ENCODE measurements at regions of chrX and their contacts with region 1.

Region 1: DNA sequence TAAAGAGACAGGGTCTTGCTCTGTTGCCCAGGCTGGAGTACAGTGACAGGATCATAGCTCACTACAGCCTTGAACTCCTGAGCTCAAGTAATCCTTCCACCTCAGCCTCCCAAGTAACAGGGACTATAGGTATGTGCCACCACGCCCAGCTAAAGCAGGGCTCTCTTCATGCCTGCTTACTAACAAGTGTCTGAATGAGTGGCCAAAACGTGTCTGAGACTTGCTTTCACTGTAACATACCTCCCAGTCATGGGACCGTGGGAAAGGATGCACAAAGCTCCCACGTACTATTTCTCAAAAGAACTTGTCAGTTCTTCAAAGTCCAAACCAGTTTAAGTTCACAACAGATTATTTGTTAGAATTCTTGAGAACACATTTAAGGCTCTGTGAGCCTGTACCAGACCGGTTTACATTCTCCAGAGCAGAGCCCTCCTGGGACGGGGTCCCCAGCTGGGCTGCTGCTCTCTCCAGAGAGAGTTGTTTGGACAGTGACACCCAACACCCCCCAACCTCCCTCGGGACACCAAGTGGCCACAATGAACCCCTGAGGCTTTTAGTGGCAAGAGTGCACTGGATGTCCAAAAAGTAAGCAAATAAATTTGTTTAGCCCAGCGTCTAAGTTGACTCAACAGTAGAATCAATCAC is 24.1 kb downstream of the SH3KBP1 start:
- DNase-seq: peak; percentile 88
- ATAC-seq: peak; percentile 70
- H3K4me3 ChIP-seq: 0 out of 2 replicates have a peak overlapping the region, but pooled peaks have one; percentile 39
- H3K27ac ChIP-seq: peak overlapping the region; percentile 93
- H3K4me1 ChIP-seq: peaks cover 52% of the 10 kb centered on the region
- H3K27me3 ChIP-seq: no peaks in the 10 kb centered on the region
- CTCF ChIP-seq: no peak
- EP300 ChIP-seq: peak; percentile 35 to 69; a peak in 2 of 4 replicates
- POLR2A ChIP-seq: no peak
- RAD21 ChIP-seq: 0 out of 2 replicates have a peak, but pooled peaks have one; percentile 2

Region 2: DNA sequence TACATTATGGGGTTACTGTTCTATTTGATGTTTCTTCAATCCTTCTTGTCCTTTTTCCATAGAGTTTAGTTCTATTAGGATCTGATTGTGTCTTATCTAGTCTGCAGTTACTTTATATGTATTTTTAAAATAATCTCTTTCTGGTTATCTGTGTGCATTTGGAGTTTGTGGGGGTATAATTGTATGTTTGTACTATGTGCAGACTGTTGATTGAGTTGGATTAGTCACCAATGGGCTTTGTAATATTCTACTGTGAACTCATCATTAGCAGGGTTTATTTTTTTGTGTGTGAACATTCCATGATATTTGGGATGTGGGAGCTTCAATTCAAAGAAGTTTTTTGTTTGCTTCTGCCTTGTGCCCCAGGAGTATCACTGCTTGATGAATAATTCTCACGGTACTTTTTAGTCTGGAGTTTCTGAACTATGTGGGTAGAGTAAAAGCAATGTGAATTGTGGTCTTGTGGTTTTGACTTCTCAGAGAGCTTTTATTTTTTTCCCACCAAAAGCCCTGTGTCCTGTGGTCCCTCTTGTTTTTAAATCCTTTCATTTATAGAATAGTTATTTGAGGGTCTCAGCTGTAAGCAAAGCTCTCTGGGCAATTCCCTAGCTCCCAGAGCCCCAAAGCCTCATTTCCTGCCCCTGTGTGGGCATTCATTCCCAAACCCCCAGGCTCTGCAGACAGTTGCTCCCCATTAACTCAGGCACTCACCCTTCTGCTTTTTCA is 1007.3 kb before region 1 on chrX:
- CTCF ChIA-PET with region 1: no interaction called
- POLR2A ChIA-PET with region 1: no interaction called
- RAD21 ChIA-PET with region 1: no interaction called
- SMC1A ChIA-PET with region 1: no interaction called
- in situ Hi-C with region 1: loop called (anchors 10 kb)
- intact Hi-C with region 1: no loop called
- DNase-seq: peak; percentile 90
- ATAC-seq: peak; percentile 94
- H3K4me3 ChIP-seq: no peak overlapping the region
- H3K27ac ChIP-seq: peak overlapping the region; percentile 96
- H3K4me1 ChIP-seq: peaks cover 19% of the 10 kb centered on the region
- H3K27me3 ChIP-seq: no peaks in the 10 kb centered on the region
- CTCF ChIP-seq: no peak
- EP300 ChIP-seq: peak; percentile 14 to 55; a peak in 1 of 4 replicates
- POLR2A ChIP-seq: no peak
- RAD21 ChIP-seq: peak; percentile 42; the same call in 1 of the 2 replicates

Region 3: GRCh38 chrX:19747652-19748610 is 115.4 kb before region 1 on chrX:
- CTCF ChIA-PET with region 1: interaction called, 4 read pairs
- POLR2A ChIA-PET with region 1: interaction called, 11 read pairs
- RAD21 ChIA-PET with region 1: interaction called, 16 read pairs
- SMC1A ChIA-PET with region 1: interaction called, 19 read pairs
- in situ Hi-C with region 1: no loop called
- intact Hi-C with region 1: loop called (anchors 5 kb)
- DNase-seq: no peak
- ATAC-seq: peak; percentile 48
- H3K4me3 ChIP-seq: no peak overlapping the region
- H3K27ac ChIP-seq: peak overlapping the region; percentile 91
- H3K4me1 ChIP-seq: peaks cover 59% of the 10 kb centered on the region
- H3K27me3 ChIP-seq: no peaks in the 10 kb centered on the region
- CTCF ChIP-seq: no peak
- EP300 ChIP-seq: peak in 1 of 2 experiments; percentile 33; a peak in 1 of 4 replicates
- POLR2A ChIP-seq: no peak
- RAD21 ChIP-seq: no peak

Region 4: GRCh38 chrX:19785647-19786046 is 77.7 kb before region 1 on chrX:
- CTCF ChIA-PET with region 1: no interaction called
- POLR2A ChIA-PET with region 1: interaction called, 3 read pairs
- RAD21 ChIA-PET with region 1: interaction called, 3 read pairs
- SMC1A ChIA-PET with region 1: interaction called, 11 read pairs
- in situ Hi-C with region 1: no loop called
- intact Hi-C with region 1: loop called (anchors 5 kb)
- DNase-seq: no peak
- ATAC-seq: peak; percentile 65
- H3K4me3 ChIP-seq: no peak overlapping the region
- H3K27ac ChIP-seq: no peak overlapping the region
- H3K4me1 ChIP-seq: peaks cover 6% of the 10 kb centered on the region
- H3K27me3 ChIP-seq: no peaks in the 10 kb centered on the region
- CTCF ChIP-seq: no peak
- EP300 ChIP-seq: no peak
- POLR2A ChIP-seq: no peak
- RAD21 ChIP-seq: no peak

Region 5: GRCh38 chrX:19805046-19805690 is 58.2 kb before region 1 on chrX:
- CTCF ChIA-PET with region 1: interaction called, 3 read pairs
- POLR2A ChIA-PET with region 1: interaction called, 5 read pairs
- RAD21 ChIA-PET with region 1: interaction called, 24 read pairs
- SMC1A ChIA-PET with region 1: interaction called, 12 read pairs
- in situ Hi-C with region 1: no loop called
- intact Hi-C with region 1: no loop called
- DNase-seq: no peak
- ATAC-seq: no peak; the same call in 2 of the 3 replicates
- H3K4me3 ChIP-seq: peak overlapping the region; percentile 12; the same call in 1 of the 2 replicates
- H3K27ac ChIP-seq: peak overlapping the region; percentile 48
- H3K4me1 ChIP-seq: peaks cover 32% of the 10 kb centered on the region
- H3K27me3 ChIP-seq: no peaks in the 10 kb centered on the region
- CTCF ChIP-seq: no peak
- EP300 ChIP-seq: no peak
- POLR2A ChIP-seq: no peak
- RAD21 ChIP-seq: no peak

Region 6: DNA sequence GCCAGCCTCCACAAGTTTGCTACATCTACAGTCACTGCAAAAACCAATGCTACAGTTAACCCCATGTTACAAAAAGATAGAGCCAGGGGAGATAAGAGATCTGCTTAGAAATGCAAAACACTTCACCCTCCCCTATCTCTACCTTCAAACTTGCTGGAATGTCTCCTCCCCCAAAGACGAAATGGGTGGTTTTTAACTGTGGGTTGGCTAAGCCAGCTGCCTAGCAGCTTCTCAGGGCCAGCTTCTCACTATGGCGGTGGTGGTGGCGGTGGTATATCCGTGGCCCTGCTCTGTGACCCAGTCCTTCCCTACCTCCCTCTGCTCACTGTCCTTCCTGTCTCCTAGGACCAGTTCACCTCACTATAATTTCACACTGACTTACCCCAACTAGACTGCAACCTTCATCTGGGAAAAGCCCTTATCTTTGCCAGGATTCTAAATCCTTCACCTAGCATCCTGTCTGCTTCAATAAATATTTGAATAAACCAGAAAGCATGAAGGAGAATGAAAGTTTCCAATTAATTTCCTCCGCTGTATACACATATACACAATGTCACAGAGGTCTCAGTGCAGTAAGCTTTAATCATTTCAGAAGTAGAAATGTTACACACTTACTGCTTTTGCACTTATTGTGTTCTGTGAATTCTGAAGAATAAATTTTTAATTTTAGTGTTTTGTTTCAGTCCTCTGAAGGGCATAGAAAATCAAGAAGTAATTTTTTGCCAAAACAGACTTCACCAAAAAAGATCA is 22.3 kb before region 1 on chrX:
- CTCF ChIA-PET with region 1: interaction called, 7 read pairs
- POLR2A ChIA-PET with region 1: interaction called, 18 read pairs
- RAD21 ChIA-PET with region 1: interaction called, 35 read pairs
- SMC1A ChIA-PET with region 1: interaction called, 75 read pairs
- in situ Hi-C with region 1: no loop called
- intact Hi-C with region 1: loop called (anchors 2 kb)
- DNase-seq: peak; percentile 64
- ATAC-seq: peak; percentile 74
- H3K4me3 ChIP-seq: no peak overlapping the region
- H3K27ac ChIP-seq: peak overlapping the region; percentile 81
- H3K4me1 ChIP-seq: peaks cover 30% of the 10 kb centered on the region
- H3K27me3 ChIP-seq: no peaks in the 10 kb centered on the region
- CTCF ChIP-seq: no peak
- EP300 ChIP-seq: 0 out of 4 replicates have a peak, but pooled peaks of 1 of the 2 experiments have one; percentile 10
- POLR2A ChIP-seq: peak; percentile 66
- RAD21 ChIP-seq: no peak

Region 7: DNA sequence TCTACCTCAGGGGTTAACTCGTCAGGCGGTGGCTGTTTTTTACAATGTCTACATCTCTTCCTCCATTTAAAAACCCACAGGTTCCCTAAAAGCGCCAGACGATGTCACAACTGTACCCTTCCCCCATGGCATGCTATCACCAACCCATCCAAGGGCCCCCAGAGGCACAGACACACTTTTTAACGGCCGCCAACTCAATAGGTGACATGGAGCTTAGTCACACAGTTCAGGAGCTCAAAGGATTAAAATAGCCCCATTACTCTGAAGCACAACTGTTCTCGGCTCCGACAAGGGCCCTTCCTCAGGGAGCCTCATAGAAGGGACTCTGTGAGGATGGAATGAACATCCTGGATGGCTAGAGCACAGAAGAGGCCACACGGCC is 11.7 kb after region 1 on chrX:
- CTCF ChIA-PET with region 1: interaction called, 12 read pairs
- POLR2A ChIA-PET with region 1: interaction called, 18 read pairs
- RAD21 ChIA-PET with region 1: interaction called, 73 read pairs
- SMC1A ChIA-PET with region 1: interaction called, 27 read pairs
- in situ Hi-C with region 1: no loop called
- intact Hi-C with region 1: no loop called
- DNase-seq: no peak
- ATAC-seq: peak; percentile 36
- H3K4me3 ChIP-seq: peak overlapping the region; percentile 46; the same call in 1 of the 2 replicates
- H3K27ac ChIP-seq: peak overlapping the region; percentile 68
- H3K4me1 ChIP-seq: peaks cover 24% of the 10 kb centered on the region
- H3K27me3 ChIP-seq: no peaks in the 10 kb centered on the region
- CTCF ChIP-seq: no peak
- EP300 ChIP-seq: no peak
- POLR2A ChIP-seq: no peak
- RAD21 ChIP-seq: no peak